Activated T-helper 1 cell treated with anti-CD3 and anti-CD28 coated beads, Interleukin-12 subunit alpha, Interleukin-12 subunit beta, Interleukin-2, Interleukin-4 antibody, amounts not matched to agents 30 ng/mL and 10 ng/mL and 1 ng/mL, durations not matched to agents 14 hours and 24 hours and 36 hours (primary cell): ENCODE measurements at regions of chr3 and their contacts with region 1.

Region 1: GRCh38 chr3:14178247-14179113 is at the starts of genes LSM3 and XPC:
- DNase-seq: peak; percentile 98
- H3K4me3 Mint-ChIP-seq: peak within 1 kb of the TSS; percentile 94
- H3K27ac Mint-ChIP-seq: peak within 1 kb of the TSS; percentile 99
- H3K4me1 Mint-ChIP-seq: peaks cover 64% of the 10 kb centered on the region
- H3K27me3 Mint-ChIP-seq: no peaks in the 10 kb centered on the region
- total RNA-seq, gene LSM3: 15.6 and 15.8 TPM in 2 replicates
- total RNA-seq, gene XPC: 34.1 and 35.9 TPM in 2 replicates

Region 2: DNA sequence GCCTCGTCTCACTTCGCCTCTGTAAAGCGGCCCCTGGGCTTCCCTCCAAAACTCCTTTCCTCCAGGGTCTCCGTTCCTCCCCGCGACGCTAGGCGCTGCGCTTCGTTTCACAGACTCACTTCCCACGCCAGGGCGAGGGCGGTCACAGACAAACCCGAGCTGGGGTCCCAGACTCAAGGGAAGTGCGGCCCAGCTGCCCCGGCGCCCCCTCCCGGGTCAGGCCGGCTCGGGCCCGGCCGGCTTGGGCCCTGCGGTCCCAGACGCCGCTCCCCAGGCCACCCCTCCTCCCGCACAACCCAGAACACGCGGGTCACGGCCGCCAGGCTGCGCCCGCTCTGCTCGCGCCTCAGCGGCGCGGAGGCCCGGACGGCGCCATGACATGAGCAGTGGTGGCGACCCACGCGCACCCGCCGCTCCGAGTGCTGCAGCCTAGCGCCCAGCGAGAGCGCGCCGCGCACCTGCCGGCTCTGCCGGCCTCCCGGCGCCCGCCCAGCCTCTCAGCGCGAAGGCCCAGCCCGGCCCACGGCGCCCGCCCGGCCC is 758.9 kb before region 1 on chr3:
- intact Hi-C with region 1: loop called (anchors 10 kb)
- DNase-seq: peak; percentile 56
- H3K4me3 Mint-ChIP-seq: peak overlapping the region; percentile 88
- H3K27ac Mint-ChIP-seq: peak overlapping the region; percentile 92
- H3K4me1 Mint-ChIP-seq: peaks cover 71% of the 10 kb centered on the region
- H3K27me3 Mint-ChIP-seq: no peaks in the 10 kb centered on the region

Region 3: GRCh38 chr3:13598926-13599886 is 579.3 kb before region 1 on chr3:
- intact Hi-C with region 1: no loop called
- DNase-seq: no peak
- H3K4me3 Mint-ChIP-seq: no peak overlapping the region
- H3K27ac Mint-ChIP-seq: no peak overlapping the region
- H3K4me1 Mint-ChIP-seq: no peaks in the 10 kb centered on the region
- H3K27me3 Mint-ChIP-seq: peaks cover 6% of the 10 kb centered on the region

Region 4: DNA sequence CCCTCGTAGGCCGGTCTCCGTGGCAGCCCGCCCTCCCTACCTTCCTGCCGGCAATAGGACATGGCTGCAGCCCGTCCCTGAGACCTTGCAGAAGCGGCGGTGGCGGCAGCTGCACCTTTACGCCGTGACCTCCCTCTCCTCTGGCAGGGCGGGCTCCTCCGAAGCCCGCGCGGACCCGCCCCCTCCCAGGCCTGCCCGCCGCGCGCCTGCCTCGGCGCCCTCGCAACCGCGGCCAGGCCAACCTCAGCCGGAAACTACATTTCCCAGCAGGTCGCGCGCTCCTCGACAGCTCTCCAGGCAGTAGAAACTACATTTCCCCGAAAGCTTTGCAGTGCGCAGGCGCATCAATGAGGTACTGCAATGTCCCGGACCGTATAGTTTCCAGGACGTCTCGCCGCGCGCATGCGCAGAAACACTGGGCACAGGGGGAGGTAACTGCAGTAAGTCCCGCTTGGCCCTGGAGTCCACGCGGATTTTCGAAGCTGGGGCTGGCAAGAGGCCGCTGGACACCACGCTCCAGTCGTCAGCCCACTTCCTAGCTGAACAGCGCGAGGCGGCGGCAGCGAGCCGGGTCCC is 53.8 kb before region 1 on chr3 and contains the starts of genes CHCHD4 and TMEM43:
- intact Hi-C with region 1: loop called (anchors 1 kb)
- DNase-seq: peak; percentile 98
- H3K4me3 Mint-ChIP-seq: peak within 1 kb of the TSS; percentile 93
- H3K27ac Mint-ChIP-seq: peak within 1 kb of the TSS; percentile 96
- H3K4me1 Mint-ChIP-seq: peaks cover 67% of the 10 kb centered on the region
- H3K27me3 Mint-ChIP-seq: no peaks in the 10 kb centered on the region
- total RNA-seq, gene CHCHD4: 27.8 and 29.4 TPM in 2 replicates
- total RNA-seq, gene TMEM43: 40.4 and 41.3 TPM in 2 replicates

Region 5: DNA sequence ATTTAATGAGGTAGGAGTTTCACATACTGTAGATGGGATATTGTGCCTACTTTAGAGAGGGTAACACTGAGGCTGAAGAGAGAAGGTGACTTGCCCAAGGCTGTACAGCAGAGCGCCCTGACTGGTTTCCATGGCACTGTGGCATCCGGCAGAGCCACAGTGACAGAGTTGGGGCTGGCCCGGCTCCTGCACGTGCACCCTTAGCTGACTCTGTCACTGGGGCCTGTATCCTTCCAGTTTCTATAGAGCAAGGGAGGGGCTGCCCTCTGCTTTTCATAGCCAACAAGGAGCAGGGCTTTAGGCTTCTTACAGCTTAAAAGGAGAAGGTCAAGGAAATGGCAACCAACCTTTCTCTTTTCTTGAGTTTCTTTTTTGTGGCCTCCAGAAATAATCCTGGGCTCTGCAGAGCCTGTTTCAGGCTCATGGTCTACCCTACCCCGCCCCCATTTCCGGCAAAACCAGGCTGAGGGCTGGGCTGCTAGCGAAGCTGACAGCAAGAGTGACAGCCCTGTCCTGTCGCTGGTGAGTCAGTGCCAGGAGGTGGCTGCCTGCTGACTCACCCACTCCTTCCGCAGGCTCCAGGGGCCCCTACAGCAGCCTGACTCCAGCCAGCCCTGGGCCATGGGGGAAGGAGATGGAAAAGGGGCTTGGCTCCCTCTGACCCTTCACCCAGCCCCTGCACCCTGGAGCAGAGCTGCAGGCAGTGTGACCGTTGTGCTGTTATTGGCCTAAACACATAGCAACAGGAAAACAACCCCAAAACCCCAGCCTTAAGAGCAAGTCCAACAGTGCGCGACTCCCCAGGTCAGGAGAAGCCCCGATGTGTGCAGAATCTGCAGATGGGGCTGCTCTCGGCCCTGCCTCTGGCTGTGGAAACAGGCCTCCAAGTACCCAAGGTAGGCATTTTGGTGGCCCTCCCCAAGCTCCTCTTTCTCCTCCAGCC is 253.7 kb after region 1 on chr3:
- intact Hi-C with region 1: loop called (anchors 1 kb)
- DNase-seq: peak; percentile 92
- H3K4me3 Mint-ChIP-seq: peak overlapping the region; percentile 76
- H3K27ac Mint-ChIP-seq: peak overlapping the region; percentile 97
- H3K4me1 Mint-ChIP-seq: peaks cover 85% of the 10 kb centered on the region
- H3K27me3 Mint-ChIP-seq: no peaks in the 10 kb centered on the region

Region 6: DNA sequence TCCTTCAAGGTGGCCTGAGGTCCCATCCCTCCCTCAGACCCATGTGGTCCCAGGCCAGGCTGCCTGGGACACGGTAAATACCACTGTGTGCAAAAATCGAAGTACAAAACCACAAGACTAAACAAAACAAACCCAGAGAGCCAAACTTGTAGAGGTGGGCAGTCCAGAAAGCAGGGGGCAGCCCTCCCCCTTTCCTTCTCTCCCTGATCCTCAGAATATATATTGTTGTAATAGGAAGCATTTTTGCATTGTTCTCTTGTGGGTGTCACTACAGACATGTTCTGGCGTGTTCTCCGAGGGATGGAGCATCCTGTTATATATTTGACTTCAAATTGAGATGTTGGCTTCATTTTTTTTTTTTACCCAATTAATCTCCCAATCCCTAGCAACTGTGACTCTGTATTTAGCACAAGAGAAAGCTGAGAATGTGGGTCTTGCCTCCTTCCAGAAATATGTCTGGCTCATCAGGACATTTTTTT is 310.1 kb after region 1 on chr3:
- intact Hi-C with region 1: no loop called
- DNase-seq: no peak
- H3K4me3 Mint-ChIP-seq: no peak overlapping the region
- H3K27ac Mint-ChIP-seq: no peak overlapping the region
- H3K4me1 Mint-ChIP-seq: no peaks in the 10 kb centered on the region
- H3K27me3 Mint-ChIP-seq: no peaks in the 10 kb centered on the region

Region 7: DNA sequence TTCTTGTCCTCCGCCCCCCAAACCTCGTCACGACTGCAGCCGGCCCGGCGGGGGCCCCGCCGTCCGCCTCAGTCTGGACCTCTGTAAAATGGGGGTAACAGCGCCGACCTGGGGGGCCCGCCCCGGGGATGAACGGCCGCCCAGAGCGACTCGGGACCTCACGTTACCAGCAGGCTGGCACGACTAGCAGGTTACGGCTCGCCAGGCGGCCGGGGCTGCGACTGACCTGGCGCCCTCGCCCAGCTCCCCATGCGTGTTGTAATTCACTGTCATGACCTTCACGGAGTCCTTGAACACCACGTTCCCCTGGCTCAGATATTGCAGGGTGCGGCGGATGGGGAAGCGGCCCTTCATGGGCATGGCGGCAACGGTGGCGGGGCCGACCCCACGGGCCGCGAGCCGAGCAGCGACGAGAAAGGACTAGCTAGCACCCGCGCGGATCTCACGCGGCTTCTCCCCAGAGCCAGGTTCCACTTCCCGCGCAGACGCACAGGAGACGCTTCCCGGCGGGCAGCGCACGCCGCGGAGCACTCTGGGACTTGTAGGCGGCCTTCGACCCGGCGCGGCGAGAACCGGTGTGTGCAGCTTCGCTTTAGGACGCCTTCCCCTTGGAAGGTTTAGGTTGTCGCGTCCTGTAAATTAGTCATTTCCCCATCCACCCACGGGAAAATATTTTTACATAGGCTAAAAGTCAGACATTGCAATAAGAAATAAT is 886.5 kb after region 1 on chr3 and contains the start of gene MRPS25:
- intact Hi-C with region 1: loop called (anchors 1 kb)
- DNase-seq: peak; percentile 90
- H3K4me3 Mint-ChIP-seq: peak within 1 kb of the TSS; percentile 96
- H3K27ac Mint-ChIP-seq: peak within 1 kb of the TSS; percentile 95
- H3K4me1 Mint-ChIP-seq: peaks cover 20% of the 10 kb centered on the region
- H3K27me3 Mint-ChIP-seq: no peaks in the 10 kb centered on the region
- total RNA-seq, gene MRPS25: 96.5 and 105 TPM in 2 replicates